A673 (cell line): ENCODE measurements at regions of chr11 and their contacts with region 1.

Region 1: GRCh38 chr11:30346068-30346688 is 23.3 kb downstream of the ARL14EP start:
- DNase-seq: peak; percentile 93
- H3K4me3 ChIP-seq: no peak overlapping the region
- H3K27ac ChIP-seq: no peak overlapping the region
- H3K4me1 ChIP-seq: no peaks in the 10 kb centered on the region
- H3K27me3 ChIP-seq: no peaks in the 10 kb centered on the region
- CTCF ChIP-seq: peak; percentile 99

Region 2: GRCh38 chr11:30586251-30587144 is 240.3 kb after region 1 on chr11 and contains the start of gene MPPED2:
- CTCF ChIA-PET with region 1: no interaction called
- POLR2A ChIA-PET with region 1: no interaction called
- intact Hi-C with region 1: loop called (anchors 5 kb)
- DNase-seq: peak; percentile 58
- H3K4me3 ChIP-seq: peak within 1 kb of the TSS; percentile 50
- H3K27ac ChIP-seq: no peak within 1 kb of the TSS
- H3K4me1 ChIP-seq: peaks cover 19% of the 10 kb centered on the region
- H3K27me3 ChIP-seq: peaks cover 88% of the 10 kb centered on the region
- CTCF ChIP-seq: peak; percentile 39
- total RNA-seq, gene MPPED2: 2.0 and 3.4 TPM in 2 replicates

Region 3: DNA sequence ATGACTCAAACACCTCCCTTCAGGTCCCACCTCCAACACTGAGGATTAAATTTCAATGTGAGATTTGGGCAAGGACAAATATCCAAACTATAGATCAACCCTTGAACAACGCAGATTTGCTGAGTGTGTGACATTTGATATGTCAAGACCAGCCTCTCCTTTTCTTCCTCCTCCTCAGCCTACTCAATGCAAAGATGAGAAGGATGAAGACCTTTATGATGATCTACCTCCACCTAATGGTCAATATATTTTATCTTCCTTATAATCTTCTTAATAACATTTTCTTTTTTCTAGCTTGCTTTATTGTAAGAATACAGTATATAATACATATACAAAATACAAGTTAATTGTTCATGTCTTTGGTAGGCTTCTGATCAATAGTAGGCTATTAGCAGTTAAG is 307.4 kb after region 1 on chr11:
- CTCF ChIA-PET with region 1: no interaction called
- POLR2A ChIA-PET with region 1: no interaction called
- intact Hi-C with region 1: loop called (anchors 5 kb)
- DNase-seq: peak; percentile 32
- H3K4me3 ChIP-seq: no peak overlapping the region
- H3K27ac ChIP-seq: no peak overlapping the region
- H3K4me1 ChIP-seq: no peaks in the 10 kb centered on the region
- H3K27me3 ChIP-seq: no peaks in the 10 kb centered on the region
- CTCF ChIP-seq: peak; percentile 37; the same call in 1 of the 2 replicates

Region 4: DNA sequence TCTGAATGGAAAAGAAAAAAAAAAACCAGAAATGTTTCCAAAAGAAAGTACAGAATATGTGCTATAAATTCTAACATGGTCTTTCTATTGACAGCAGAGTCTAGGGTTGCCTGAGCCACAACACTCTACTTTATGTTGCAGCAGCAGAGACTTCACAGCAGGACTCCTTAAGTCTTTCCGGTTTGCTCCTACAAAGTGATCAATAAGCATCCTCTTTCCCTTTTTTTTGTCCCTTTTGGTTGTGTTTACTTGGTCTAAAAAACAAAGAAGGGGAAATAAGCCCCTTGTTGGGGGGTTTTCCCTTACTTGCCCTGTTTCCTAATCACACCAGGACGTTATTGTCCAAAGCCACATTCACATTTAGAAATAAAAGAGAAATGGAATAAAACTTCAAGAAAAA is 403.1 kb after region 1 on chr11:
- CTCF ChIA-PET with region 1: no interaction called
- POLR2A ChIA-PET with region 1: no interaction called
- intact Hi-C with region 1: loop called (anchors 5 kb)
- DNase-seq: peak; percentile 100
- H3K4me3 ChIP-seq: no peak overlapping the region
- H3K27ac ChIP-seq: peak overlapping the region; percentile 73
- H3K4me1 ChIP-seq: peaks cover 50% of the 10 kb centered on the region
- H3K27me3 ChIP-seq: no peaks in the 10 kb centered on the region
- CTCF ChIP-seq: no peak

Region 5: GRCh38 chr11:30855383-30856006 is 509.3 kb after region 1 on chr11:
- CTCF ChIA-PET with region 1: interaction called, 3 read pairs
- POLR2A ChIA-PET with region 1: no interaction called
- intact Hi-C with region 1: loop called (anchors 1 kb)
- DNase-seq: peak; percentile 77
- H3K4me3 ChIP-seq: no peak overlapping the region
- H3K27ac ChIP-seq: no peak overlapping the region
- H3K4me1 ChIP-seq: peaks cover 12% of the 10 kb centered on the region
- H3K27me3 ChIP-seq: no peaks in the 10 kb centered on the region
- CTCF ChIP-seq: peak; percentile 88